HCT116 (cell line): ENCODE measurements at regions of chr12 and their contacts with region 1.

Region 1: GRCh38 chr12:113965951-113966797 is at the start of gene RBM19:
- DNase-seq: peak; percentile 96
- ATAC-seq: peak; percentile 99
- H3K4me3 ChIP-seq: peak within 1 kb of the TSS; percentile 91 to 98
- H3K27ac ChIP-seq: peak within 1 kb of the TSS; percentile 23; the same call in 1 of the 2 replicates
- H3K4me1 ChIP-seq: peaks cover 6 to 15% of the 10 kb centered on the region in 2 experiments; a peak in 3 of 4 replicates
- H3K27me3 ChIP-seq: no peaks in the 10 kb centered on the region
- CTCF ChIP-seq: peak; percentile 60 to 81 (median 81); a peak in 5 of 6 replicates
- POLR2A ChIP-seq: peak; percentile 43
- RAD21 ChIP-seq: peak; percentile 58
- total RNA-seq, gene RBM19: 30.7 TPM

Region 2: GRCh38 chr12:113664224-113664681 is 301.9 kb before region 1 on chr12:
- CTCF ChIA-PET with region 1: no interaction called
- POLR2A ChIA-PET with region 1: no interaction called
- RAD21 ChIA-PET with region 1: no interaction called
- intact Hi-C with region 1: no loop called
- DNase-seq: no peak
- ATAC-seq: no peak
- H3K4me3 ChIP-seq: no peak overlapping the region
- H3K27ac ChIP-seq: no peak overlapping the region
- H3K4me1 ChIP-seq: no peaks in the 10 kb centered on the region
- H3K27me3 ChIP-seq: peaks cover 22% of the 10 kb centered on the region
- CTCF ChIP-seq: no peak
- POLR2A ChIP-seq: no peak
- RAD21 ChIP-seq: no peak

Region 3: DNA sequence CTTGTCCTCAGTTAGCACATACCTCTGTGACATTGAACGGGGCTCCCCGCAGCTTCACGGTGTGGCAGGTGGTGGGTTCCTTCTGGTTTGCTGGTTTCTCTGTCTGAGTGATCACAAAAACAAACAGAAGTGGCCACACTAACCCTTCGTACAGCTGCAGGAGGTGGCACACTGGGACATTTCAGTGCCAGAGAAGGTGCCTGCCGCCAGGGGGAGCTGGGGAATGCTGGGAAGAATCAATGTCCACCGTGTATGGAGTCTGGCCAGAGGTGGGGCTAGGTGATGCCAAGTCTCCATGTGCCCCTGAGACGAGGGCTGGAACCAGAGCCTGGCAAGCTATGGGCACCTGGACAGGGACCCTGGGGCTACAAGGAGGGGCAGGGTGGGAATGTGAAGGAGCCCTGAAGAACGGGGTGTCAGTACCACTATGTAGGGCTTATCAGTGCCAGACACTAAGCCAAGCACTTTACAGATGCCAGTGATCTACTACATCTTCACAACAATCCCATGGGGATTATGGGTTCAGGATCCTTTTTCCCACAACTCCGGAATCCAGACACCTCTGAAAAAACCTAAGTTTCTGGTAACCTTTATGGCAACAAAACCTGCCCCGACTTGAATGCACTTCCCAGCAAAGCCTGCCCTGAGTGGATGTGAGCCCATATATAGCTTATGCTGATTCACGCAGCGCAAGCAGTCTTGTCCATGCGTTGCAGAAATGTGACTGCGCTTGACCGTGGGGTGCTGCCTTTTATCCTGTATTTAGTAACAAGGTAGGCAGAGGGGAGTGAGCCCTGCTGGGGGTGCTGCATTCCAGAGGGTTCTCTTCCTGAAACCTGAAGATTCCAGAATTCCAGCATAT is 10.8 kb before region 1 on chr12:
- CTCF ChIA-PET with region 1: interaction called, 17 read pairs
- POLR2A ChIA-PET with region 1: no interaction called
- RAD21 ChIA-PET with region 1: no interaction called
- intact Hi-C with region 1: no loop called
- DNase-seq: peak; percentile 16
- ATAC-seq: peak; percentile 97
- H3K4me3 ChIP-seq: no peak overlapping the region
- H3K27ac ChIP-seq: peak overlapping the region; percentile 26; the same call in 1 of the 2 replicates
- H3K4me1 ChIP-seq: no peaks in the 10 kb centered on the region
- H3K27me3 ChIP-seq: no peaks in the 10 kb centered on the region
- CTCF ChIP-seq: peak; percentile 51 to 88 (median 86); a peak in 5 of 6 replicates
- POLR2A ChIP-seq: no peak
- RAD21 ChIP-seq: peak; percentile 32; the same call in 1 of the 2 replicates